ENCODE measurements at regions of chr9 and their contacts with region 1.

Region 1: GRCh38 chr9:137254624-137255447 is at the start of gene NELFB:
- H3K4me3 Mint-ChIP-seq: peak within 1 kb of the TSS; percentile 78
- H3K27ac Mint-ChIP-seq: peak within 1 kb of the TSS; percentile 78
- H3K4me1 Mint-ChIP-seq: peaks cover 40% of the 10 kb centered on the region
- H3K27me3 Mint-ChIP-seq: peaks cover 6% of the 10 kb centered on the region

Region 2: DNA sequence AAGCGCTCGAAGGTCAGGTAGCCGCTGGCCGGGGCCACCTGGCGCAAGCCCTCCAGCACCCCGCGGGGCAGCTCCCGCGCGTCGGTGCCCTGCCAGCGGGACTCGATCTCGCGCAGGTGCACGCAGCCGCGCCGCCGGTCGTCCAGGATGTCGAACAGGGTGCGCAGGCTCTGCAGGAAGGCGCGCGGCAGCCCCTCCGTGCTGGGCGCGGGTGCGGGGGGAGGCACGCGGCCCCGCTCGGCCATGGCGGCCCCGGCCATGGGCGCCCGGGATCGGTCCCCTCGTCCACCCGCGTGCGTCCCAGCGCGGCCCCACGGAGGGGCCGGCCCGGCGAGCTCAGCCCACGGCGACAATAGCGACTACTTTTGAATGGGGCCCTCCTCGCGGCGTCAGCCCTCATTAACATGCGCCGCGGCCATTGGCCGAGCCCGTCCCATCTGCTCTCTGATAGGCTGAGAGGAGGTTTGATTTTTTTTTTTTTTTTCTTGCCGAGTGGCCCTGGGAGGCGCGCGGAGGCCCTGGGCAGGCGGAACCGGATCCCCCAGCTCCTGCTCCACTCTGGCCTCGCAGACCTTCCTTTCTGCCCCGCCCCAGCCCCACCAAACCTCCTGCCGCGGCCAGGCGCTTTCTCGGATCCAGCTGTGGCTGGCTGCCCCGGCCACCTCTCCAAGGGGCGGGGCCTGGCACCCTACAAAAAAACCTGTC is 184.5 kb before region 1 on chr9 and contains the start of gene SAPCD2:
- intact Hi-C with region 1: no loop called
- H3K4me3 Mint-ChIP-seq: peak within 1 kb of the TSS; percentile 83
- H3K27ac Mint-ChIP-seq: peak within 1 kb of the TSS; percentile 89
- H3K4me1 Mint-ChIP-seq: peaks cover 59% of the 10 kb centered on the region
- H3K27me3 Mint-ChIP-seq: no peaks in the 10 kb centered on the region

Region 3: GRCh38 chr9:137240861-137241489 is 13.9 kb before region 1 on chr9 and contains the start of gene TUBB4B:
- intact Hi-C with region 1: loop called (anchors 1 kb)
- H3K4me3 Mint-ChIP-seq: peak within 1 kb of the TSS; percentile 86
- H3K27ac Mint-ChIP-seq: peak within 1 kb of the TSS; percentile 90
- H3K4me1 Mint-ChIP-seq: peaks cover 56% of the 10 kb centered on the region
- H3K27me3 Mint-ChIP-seq: peaks cover 2% of the 10 kb centered on the region

Region 4: GRCh38 chr9:137269231-137269772 is 14.5 kb after region 1 on chr9:
- intact Hi-C with region 1: no loop called
- H3K4me3 Mint-ChIP-seq: no peak overlapping the region
- H3K27ac Mint-ChIP-seq: no peak overlapping the region
- H3K4me1 Mint-ChIP-seq: peaks cover 41% of the 10 kb centered on the region
- H3K27me3 Mint-ChIP-seq: no peaks in the 10 kb centered on the region